KBM-7 (cell line): ENCODE measurements at regions of chr17 and their contacts with region 1.

Region 1: DNA sequence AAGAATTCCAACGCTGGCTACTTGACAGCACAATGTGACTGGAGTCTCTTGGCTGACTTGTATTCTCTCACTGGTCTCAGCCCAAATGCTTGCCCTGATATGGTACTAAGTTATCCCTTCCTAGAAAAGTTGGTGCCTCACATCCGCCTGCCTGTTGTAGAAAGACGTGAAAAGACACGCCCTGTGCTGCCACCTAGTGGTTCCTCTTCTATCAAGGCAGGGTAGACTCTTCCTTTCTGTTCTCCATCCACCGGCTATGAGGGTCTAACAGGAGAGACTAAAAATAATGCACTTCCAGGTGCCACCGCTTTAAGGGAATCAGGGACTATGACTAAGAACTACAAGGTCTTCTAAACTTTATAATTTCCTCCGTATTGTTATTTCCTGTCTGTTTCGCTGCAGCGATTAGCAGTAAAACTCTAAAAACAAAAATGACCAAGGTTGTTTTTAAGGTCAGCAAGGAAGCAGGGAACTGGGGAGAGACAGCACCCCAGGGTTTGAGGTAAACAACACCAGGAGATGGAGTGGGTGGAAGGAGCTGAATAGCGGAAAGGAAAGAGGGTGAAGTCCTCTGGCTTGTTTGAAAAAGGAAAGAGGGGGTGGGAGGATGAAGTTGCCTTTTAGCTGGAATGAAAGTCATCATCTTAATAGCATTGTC is 109.5 kb downstream of the YPEL2 start:
- DNase-seq: peak; percentile 91

Region 2: DNA sequence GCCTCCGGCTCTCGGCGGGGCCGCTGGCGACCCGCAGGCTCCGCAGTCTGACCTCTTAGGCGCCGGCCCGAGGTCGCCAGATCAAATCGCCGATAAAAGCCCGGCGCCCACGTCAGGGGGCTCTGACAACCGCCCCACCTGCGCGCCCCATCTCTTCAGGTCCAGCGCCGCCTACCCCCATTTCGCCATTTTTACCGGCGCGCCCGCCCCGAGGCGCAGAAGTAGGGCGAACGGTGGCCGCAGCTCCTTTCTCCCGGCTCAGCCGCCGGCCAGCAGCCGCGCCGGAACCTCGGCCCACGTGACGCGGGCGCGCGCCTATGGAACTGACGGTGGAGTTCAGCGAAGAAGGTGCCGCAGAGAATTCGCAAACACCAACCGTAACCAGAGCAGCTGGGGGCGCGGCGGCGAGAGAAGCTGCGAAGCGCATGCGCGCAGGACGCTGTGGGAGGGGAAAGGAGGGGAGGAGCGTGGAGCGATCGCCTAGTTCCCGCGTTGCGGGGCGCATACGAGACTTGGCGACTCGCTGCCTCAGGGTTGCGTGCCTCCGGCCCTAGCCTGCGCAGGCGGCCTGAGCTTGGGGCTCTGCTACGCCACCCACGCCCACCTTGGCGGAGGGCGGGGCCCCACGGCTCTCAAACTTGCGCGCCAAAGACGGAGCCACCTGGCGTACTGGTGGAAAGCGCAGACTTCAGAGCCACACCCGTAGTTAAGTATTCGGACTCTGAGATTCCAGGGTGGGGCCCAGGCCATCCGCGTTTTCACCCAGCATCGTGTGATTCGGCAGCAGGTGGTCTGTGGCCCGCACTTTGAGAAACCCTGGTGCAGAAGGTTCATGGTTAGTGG is 334.2 kb before region 1 on chr17 and contains the start of gene TRIM37:
- in situ Hi-C with region 1: no loop called
- DNase-seq: peak; percentile 99

Region 3: DNA sequence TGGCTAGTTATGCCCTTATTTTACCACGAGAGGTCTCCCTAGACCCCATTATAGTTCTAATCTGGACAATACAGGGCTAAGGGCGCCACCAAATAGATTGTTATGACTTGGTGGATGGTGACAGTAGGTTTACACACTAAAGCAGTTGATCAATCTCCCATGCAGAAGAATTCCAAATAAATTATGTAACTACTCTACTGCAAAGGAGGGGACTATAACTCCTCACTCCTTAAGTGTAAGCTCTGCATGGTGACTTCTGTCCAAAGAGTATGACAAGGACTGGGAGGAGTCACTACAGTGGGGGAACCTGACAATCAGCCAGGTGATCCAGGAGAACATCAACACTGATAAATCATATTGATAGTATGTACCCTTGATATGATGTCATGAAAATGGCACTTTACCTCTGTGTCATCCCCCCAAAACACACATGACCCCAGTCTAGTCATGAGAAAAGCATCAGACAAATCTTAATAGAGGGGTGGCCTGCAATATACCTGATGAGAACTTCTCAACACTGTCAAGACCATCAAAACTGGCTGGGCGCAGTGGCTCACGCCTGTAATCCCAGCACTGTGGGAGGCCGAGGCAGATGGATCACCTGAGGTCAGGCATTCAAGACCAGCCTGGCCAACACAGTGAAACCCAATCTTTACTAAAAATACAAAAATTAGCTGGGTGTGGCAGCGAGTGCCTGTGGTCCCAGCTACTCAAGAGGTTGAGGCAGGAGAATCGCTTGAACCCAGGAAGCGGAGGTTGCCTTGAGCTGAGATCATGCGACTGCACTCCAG is 129.6 kb before region 1 on chr17:
- in situ Hi-C with region 1: loop called (anchors 10 kb)
- DNase-seq: peak; percentile 80